Psoas muscle (tissue), 8 donors: ENCODE measurements at regions of chr7 and their contacts with region 1.

Region 1: GRCh38 chr7:112206238-112207044 is at the starts of genes DOCK4 and ZNF277:
- DNase-seq: peak; percentile 99
- ATAC-seq: peak; percentile 94 to 97 (median 96)
- H3K4me3 ChIP-seq: peak within 1 kb of the TSS; percentile 86
- H3K27ac ChIP-seq: peak within 1 kb of the TSS; percentile 90
- H3K4me1 ChIP-seq: peaks cover 19% of the 10 kb centered on the region
- H3K27me3 ChIP-seq: no peaks in the 10 kb centered on the region
- CTCF ChIP-seq: no peak
- total RNA-seq, gene DOCK4: 7.1 to 12.7 (median 10.9) TPM
- total RNA-seq, gene ZNF277: 10.0 to 13.3 (median 12.0) TPM

Region 2: GRCh38 chr7:111752022-111752582 is 454.3 kb before region 1 on chr7:
- intact Hi-C with region 1: loop called in 1 of 2 experiments (anchors 10 kb)
- DNase-seq: peak; percentile 39 to 58
- ATAC-seq: peak in 1 of 4 donors; percentile 57
- H3K4me3 ChIP-seq: no peak overlapping the region
- H3K27ac ChIP-seq: no peak overlapping the region
- H3K4me1 ChIP-seq: no peaks in the 10 kb centered on the region
- H3K27me3 ChIP-seq: no peaks in the 10 kb centered on the region
- CTCF ChIP-seq: peak; percentile 53

Region 3: GRCh38 chr7:111953611-111954010 is 252.8 kb before region 1 on chr7:
- intact Hi-C with region 1: loop called in 1 of 2 experiments (anchors 10 kb)
- DNase-seq: no peak
- ATAC-seq: peak; percentile 85 to 88 (median 88)
- H3K4me3 ChIP-seq: no peak overlapping the region
- H3K27ac ChIP-seq: no peak overlapping the region
- H3K4me1 ChIP-seq: peaks cover 8% of the 10 kb centered on the region
- H3K27me3 ChIP-seq: no peaks in the 10 kb centered on the region
- CTCF ChIP-seq: peak; percentile 30

Region 4: GRCh38 chr7:112080441-112080840 is 126.0 kb before region 1 on chr7:
- intact Hi-C with region 1: loop called in 1 of 2 experiments (anchors 10 kb)
- DNase-seq: no peak
- ATAC-seq: peak; percentile 57 to 78 (median 70)
- H3K4me3 ChIP-seq: peak overlapping the region; percentile 13
- H3K27ac ChIP-seq: peak overlapping the region; percentile 44
- H3K4me1 ChIP-seq: peaks cover 39% of the 10 kb centered on the region
- H3K27me3 ChIP-seq: no peaks in the 10 kb centered on the region
- CTCF ChIP-seq: no peak

Region 5: GRCh38 chr7:112129655-112130323 is 76.7 kb before region 1 on chr7:
- intact Hi-C with region 1: loop called in 1 of 2 experiments (anchors 5 kb)
- DNase-seq: peak; percentile 21 to 52
- ATAC-seq: peak; percentile 84 to 89 (median 87)
- H3K4me3 ChIP-seq: peak overlapping the region; percentile 36
- H3K27ac ChIP-seq: peak overlapping the region; percentile 59
- H3K4me1 ChIP-seq: peaks cover 47% of the 10 kb centered on the region
- H3K27me3 ChIP-seq: no peaks in the 10 kb centered on the region
- CTCF ChIP-seq: no peak

Region 6: GRCh38 chr7:112283382-112283910 is 77.0 kb after region 1 on chr7:
- intact Hi-C with region 1: no loop called
- DNase-seq: no peak
- ATAC-seq: no peak
- H3K4me3 ChIP-seq: no peak overlapping the region
- H3K27ac ChIP-seq: no peak overlapping the region
- H3K4me1 ChIP-seq: no peaks in the 10 kb centered on the region
- H3K27me3 ChIP-seq: no peaks in the 10 kb centered on the region
- CTCF ChIP-seq: no peak

Region 7: GRCh38 chr7:112306903-112307302 is 100.5 kb after region 1 on chr7:
- intact Hi-C with region 1: no loop called
- DNase-seq: no peak
- ATAC-seq: no peak
- H3K4me3 ChIP-seq: no peak overlapping the region
- H3K27ac ChIP-seq: no peak overlapping the region
- H3K4me1 ChIP-seq: no peaks in the 10 kb centered on the region
- H3K27me3 ChIP-seq: no peaks in the 10 kb centered on the region
- CTCF ChIP-seq: no peak

Region 8: GRCh38 chr7:112390167-112390566 is 183.7 kb after region 1 on chr7:
- intact Hi-C with region 1: loop called in 1 of 2 experiments (anchors 5 kb)
- DNase-seq: no peak
- ATAC-seq: no peak
- H3K4me3 ChIP-seq: no peak overlapping the region
- H3K27ac ChIP-seq: peak overlapping the region; percentile 86
- H3K4me1 ChIP-seq: no peaks in the 10 kb centered on the region
- H3K27me3 ChIP-seq: no peaks in the 10 kb centered on the region
- CTCF ChIP-seq: no peak

Region 9: GRCh38 chr7:112481833-112482670 is 275.6 kb after region 1 on chr7:
- intact Hi-C with region 1: loop called in 1 of 2 experiments (anchors 10 kb)
- DNase-seq: peak; percentile 48 to 82
- ATAC-seq: peak; percentile 85 to 91 (median 86)
- H3K4me3 ChIP-seq: peak overlapping the region; percentile 55
- H3K27ac ChIP-seq: peak overlapping the region; percentile 92
- H3K4me1 ChIP-seq: peaks cover 51% of the 10 kb centered on the region
- H3K27me3 ChIP-seq: no peaks in the 10 kb centered on the region
- CTCF ChIP-seq: no peak